ENCODE measurements at regions of chr5 and their contacts with region 1.

Region 1: DNA sequence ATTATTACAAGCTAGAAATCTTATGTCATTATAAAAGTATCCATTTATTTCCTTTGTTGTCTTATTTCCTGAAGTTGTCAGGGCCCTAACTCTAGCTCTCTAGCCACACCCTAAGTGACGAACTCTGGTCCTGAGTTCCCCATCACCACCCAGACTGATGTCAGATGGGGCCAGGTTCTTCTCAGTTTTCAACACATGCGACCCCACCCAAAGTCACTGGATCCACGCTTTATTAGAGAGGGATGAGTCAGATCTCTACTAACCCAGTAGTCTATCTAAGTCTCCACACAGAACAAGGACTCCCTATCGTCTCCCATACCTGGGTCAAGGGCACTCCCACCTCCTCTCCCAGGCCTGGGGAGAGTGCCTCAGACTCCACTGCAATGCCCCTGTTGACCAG is 6.8 kb upstream of the FEM1C start:
- DNase-seq: no peak
- ATAC-seq: no peak
- H3K4me3 ChIP-seq: no peak overlapping the region
- H3K4me3 Mint-ChIP-seq: no peak overlapping the region
- H3K27ac ChIP-seq: no peak overlapping the region
- H3K27ac Mint-ChIP-seq: no peak overlapping the region
- H3K4me1 ChIP-seq: no peaks in the 10 kb centered on the region
- H3K4me1 Mint-ChIP-seq: no peaks in the 10 kb centered on the region
- H3K27me3 ChIP-seq: no peaks in the 10 kb centered on the region
- H3K27me3 Mint-ChIP-seq: no peaks in the 10 kb centered on the region
- CTCF ChIP-seq: no peak

Region 2: GRCh38 chr5:115535479-115536035 is 15.9 kb before region 1 on chr5:
- CTCF ChIA-PET with region 1: no interaction called
- POLR2A ChIA-PET with region 1: no interaction called
- intact Hi-C with region 1: no loop called
- DNase-seq: no peak
- ATAC-seq: no peak
- H3K4me3 ChIP-seq: no peak overlapping the region
- H3K4me3 Mint-ChIP-seq: no peak overlapping the region
- H3K27ac ChIP-seq: no peak overlapping the region
- H3K27ac Mint-ChIP-seq: no peak overlapping the region
- H3K4me1 ChIP-seq: peaks cover 13 to 38% of the 10 kb centered on the region in 2 donors
- H3K4me1 Mint-ChIP-seq: peaks cover 59% of the 10 kb centered on the region
- H3K27me3 ChIP-seq: no peaks in the 10 kb centered on the region
- H3K27me3 Mint-ChIP-seq: no peaks in the 10 kb centered on the region
- CTCF ChIP-seq: no peak

Region 3: DNA sequence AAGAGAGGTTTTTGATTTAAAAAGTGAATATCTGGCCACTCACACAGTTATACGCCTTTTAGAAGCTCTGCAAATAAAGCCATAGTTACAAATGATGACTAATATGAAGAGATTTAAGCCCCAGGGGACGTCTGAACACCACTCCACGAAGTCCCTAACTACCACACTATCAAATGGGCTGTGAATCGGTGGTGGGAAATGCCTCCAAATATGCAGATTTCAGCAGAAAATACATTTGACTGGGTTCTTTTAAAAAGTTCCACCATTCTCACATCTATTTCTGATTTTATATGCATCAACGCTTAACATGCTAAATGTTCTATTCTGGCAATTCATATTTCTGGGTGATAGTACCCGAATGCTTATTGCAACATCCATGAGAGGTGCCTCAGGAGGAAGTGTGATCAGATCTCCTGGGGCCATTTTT is 28.3 kb after region 1 on chr5:
- CTCF ChIA-PET with region 1: interaction called, 13 read pairs
- POLR2A ChIA-PET with region 1: no interaction called
- intact Hi-C with region 1: no loop called
- DNase-seq: peak; percentile 24
- ATAC-seq: peak; percentile 74
- H3K4me3 ChIP-seq: no peak overlapping the region
- H3K4me3 Mint-ChIP-seq: peak overlapping the region; percentile 32
- H3K27ac ChIP-seq: no peak overlapping the region
- H3K27ac Mint-ChIP-seq: peak overlapping the region; percentile 58
- H3K4me1 ChIP-seq: peaks cover 15 to 17% of the 10 kb centered on the region in 2 donors
- H3K4me1 Mint-ChIP-seq: peaks cover 33% of the 10 kb centered on the region
- H3K27me3 ChIP-seq: no peaks in the 10 kb centered on the region
- H3K27me3 Mint-ChIP-seq: no peaks in the 10 kb centered on the region
- CTCF ChIP-seq: no peak

Region 4: DNA sequence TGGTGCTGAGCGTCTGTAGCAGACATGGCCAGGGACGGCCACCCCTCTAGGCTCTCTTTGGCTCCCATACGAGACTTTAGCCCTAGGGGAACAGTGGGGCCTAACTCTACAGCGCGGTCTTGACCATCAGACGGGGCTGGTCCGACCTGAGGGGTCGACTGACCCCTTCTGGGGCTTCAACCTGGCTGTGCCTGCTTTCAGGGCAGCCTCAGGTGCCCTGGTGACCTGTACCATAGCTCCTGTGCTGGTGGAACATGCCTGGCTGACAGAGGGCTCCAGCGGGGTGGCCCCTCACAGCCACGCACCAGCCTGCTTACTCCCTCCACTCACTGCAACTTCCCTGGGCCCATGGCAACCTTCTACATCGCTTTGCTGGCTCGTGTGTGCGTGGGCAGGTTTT is 1446.6 kb after region 1 on chr5:
- CTCF ChIA-PET with region 1: no interaction called
- POLR2A ChIA-PET with region 1: no interaction called
- intact Hi-C with region 1: no loop called
- DNase-seq: no peak
- ATAC-seq: no peak
- H3K4me3 ChIP-seq: no peak overlapping the region
- H3K4me3 Mint-ChIP-seq: no peak overlapping the region
- H3K27ac ChIP-seq: no peak overlapping the region
- H3K27ac Mint-ChIP-seq: no peak overlapping the region
- H3K4me1 ChIP-seq: no peaks in the 10 kb centered on the region
- H3K4me1 Mint-ChIP-seq: no peaks in the 10 kb centered on the region
- H3K27me3 ChIP-seq: no peaks in the 10 kb centered on the region
- H3K27me3 Mint-ChIP-seq: no peaks in the 10 kb centered on the region
- CTCF ChIP-seq: no peak